Kidney (tissue), 22 donors: ENCODE measurements at regions of chr1 and their contacts with region 1.

Region 1: GRCh38 chr1:68116643-68117235 is 66.3 kb upstream of the DIRAS3 start:
- DNase-seq: peak in 4 of 5 donors; percentile 50 to 76 (median 60)
- H3K4me3 ChIP-seq: peak overlapping the region; percentile 11 to 35 (median 17)
- H3K27ac ChIP-seq: no peak overlapping the region
- H3K4me1 ChIP-seq: peaks cover 5 to 11% (median 6%) of the 10 kb centered on the region in 3 donors
- H3K27me3 ChIP-seq: no peaks in the 10 kb centered on the region
- CTCF ChIP-seq: peak; percentile 87

Region 2: DNA sequence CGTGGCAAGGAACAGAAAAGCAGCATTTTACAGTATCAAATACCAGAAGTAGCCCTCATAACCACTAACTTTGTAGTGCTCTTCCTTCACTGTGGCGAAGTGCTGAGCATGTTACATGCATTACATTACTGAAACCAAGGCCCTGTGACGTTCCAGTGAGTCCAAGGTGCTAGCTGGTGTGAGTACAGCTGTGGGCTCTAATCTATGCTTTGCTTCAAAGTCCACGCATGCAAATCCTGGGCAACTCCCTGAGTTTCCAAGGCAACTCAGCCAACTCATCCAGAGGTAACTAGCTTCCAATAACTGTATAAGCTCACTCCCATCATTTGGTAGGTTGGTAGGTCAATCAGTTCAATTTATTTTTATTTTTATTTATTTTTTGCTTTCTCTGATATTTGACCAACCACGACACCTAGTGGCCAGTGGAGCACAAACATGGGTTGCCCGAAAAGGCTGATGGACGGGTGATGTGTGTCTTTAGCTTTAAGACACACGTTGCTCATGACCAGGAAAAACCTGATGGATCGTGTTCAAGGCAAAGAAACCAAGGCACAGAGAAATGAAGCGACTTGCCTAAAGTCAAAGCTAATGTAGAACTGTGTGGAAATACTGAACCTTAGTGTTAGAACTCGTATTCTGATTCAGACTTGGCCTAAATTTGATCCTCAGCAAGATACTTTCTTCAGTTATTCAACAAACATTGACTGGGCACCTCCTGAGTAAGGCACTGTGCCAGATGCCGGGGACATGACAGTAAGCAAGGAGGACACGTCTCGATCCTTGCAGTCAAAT is 356.5 kb before region 1 on chr1:
- intact Hi-C with region 1: loop called (anchors 10 kb)
- DNase-seq: peak in 4 of 5 donors; percentile 63 to 84 (median 76)
- H3K4me3 ChIP-seq: no peak overlapping the region
- H3K27ac ChIP-seq: peak overlapping the region; percentile 78 to 83
- H3K4me1 ChIP-seq: peaks cover 0 to 25% (median 8%) of the 10 kb centered on the region in 3 donors
- H3K27me3 ChIP-seq: no peaks in the 10 kb centered on the region
- CTCF ChIP-seq: peak; percentile 79

Region 3: GRCh38 chr1:67880056-67880601 is 236.6 kb before region 1 on chr1:
- intact Hi-C with region 1: no loop called
- DNase-seq: no peak
- H3K4me3 ChIP-seq: no peak overlapping the region
- H3K27ac ChIP-seq: no peak overlapping the region
- H3K4me1 ChIP-seq: no peaks in the 10 kb centered on the region
- H3K27me3 ChIP-seq: no peaks in the 10 kb centered on the region
- CTCF ChIP-seq: no peak

Region 4: GRCh38 chr1:68321084-68321685 is 204.4 kb after region 1 on chr1:
- intact Hi-C with region 1: loop called (anchors 5 kb)
- DNase-seq: peak; percentile 62 to 86 (median 76)
- H3K4me3 ChIP-seq: no peak overlapping the region
- H3K27ac ChIP-seq: no peak overlapping the region
- H3K4me1 ChIP-seq: no peaks in the 10 kb centered on the region
- H3K27me3 ChIP-seq: no peaks in the 10 kb centered on the region
- CTCF ChIP-seq: peak; percentile 69

Region 5: DNA sequence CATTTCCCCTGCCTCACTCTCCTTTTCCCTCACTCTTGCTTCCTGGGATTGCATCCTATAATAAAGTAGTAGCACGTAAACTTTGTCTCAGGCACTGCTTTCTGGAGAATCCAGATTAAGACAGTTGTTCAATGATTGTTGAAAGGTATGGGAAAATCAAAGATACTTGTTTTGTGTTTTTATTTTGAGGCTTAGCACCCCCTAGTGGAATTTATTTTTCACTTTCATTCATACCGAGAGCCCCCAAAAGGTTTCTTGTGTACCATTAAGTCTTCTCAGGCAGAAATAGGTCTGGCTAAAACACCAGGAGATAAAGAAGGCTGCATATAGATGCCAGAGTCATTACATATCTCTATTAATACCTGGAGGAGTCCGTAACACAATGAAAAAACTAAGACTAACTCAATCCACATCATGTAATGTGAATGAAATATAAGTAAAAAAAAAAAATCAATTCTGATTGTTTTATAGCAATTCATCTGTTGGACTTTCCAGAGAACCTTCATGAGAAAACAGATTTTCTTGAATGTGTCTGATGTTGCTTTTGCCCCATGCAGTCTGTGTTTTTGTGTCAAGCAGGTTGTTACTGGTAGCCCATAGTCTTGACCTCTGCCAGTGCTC is 229.6 kb after region 1 on chr1:
- intact Hi-C with region 1: loop called (anchors 5 kb)
- DNase-seq: peak in 2 of 5 donors; percentile 19 to 28
- H3K4me3 ChIP-seq: no peak overlapping the region
- H3K27ac ChIP-seq: no peak overlapping the region
- H3K4me1 ChIP-seq: peaks cover 0 to 3% (median 0%) of the 10 kb centered on the region in 3 donors
- H3K27me3 ChIP-seq: no peaks in the 10 kb centered on the region
- CTCF ChIP-seq: peak; percentile 18